ENCODE measurements at regions of chr22 and their contacts with region 1.

Region 1: DNA sequence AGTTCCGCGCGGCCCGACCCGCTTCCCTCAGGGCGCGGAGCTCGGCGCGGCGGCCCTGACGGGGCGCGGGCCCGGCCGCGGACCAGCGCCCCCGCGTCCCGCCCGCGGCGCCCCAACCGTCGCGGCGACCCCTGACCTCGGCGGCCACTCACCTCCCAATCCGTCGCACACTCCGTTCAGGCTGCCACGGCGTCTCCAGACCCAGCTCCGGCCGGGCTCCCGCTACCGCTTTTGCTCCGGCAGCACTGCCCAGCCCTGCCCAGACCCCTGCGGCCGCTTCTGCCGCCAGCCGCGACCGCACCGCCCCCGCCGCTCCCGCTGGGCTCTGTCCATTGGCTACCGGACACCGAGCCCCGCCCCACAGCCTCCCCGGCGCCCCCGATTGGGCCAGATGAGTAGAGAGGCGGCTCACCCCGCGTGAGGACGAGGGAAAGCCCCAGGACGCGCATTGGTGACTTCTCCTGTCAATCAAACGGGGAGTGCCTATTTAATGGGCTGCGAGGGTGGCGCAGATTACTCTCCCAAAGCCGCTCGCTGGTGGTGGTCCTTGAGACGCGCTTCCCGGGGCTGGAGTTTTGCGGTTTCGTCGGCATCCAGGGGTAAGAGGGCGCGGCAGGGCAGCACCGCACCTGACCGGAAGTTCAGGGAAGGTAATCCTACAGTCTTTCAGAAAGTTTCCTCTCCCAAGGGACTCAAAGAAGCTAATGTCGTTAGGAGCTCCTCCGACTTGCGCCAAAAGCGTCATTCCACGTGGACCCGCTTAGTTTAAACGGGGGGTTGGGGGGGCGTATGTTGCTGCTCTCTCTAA is at the start of gene PACSIN2:
- DNase-seq: peak; percentile 95
- ATAC-seq: peak; percentile 92
- H3K4me3 ChIP-seq: peak within 1 kb of the TSS; percentile 90 to 92 (median 91)
- H3K27ac ChIP-seq: peak within 1 kb of the TSS; percentile 66
- H3K4me1 ChIP-seq: peaks cover 80% of the 10 kb centered on the region
- H3K27me3 ChIP-seq: no peaks in the 10 kb centered on the region; a peak in 1 of 5 replicates
- CTCF ChIP-seq: no peak; the same call in none of the 2 replicates
- EP300 ChIP-seq: no peak
- POLR2A ChIP-seq: peak; percentile 99
- RAD21 ChIP-seq: no peak
- total RNA-seq, gene PACSIN2: 54.1 and 65.1 TPM in 2 replicates

Region 2: GRCh38 chr22:42915980-42916765 is 98.9 kb before region 1 on chr22:
- CTCF ChIA-PET with region 1: no interaction called
- POLR2A ChIA-PET with region 1: interaction called, 22 read pairs
- in situ Hi-C with region 1: no loop called
- intact Hi-C with region 1: no loop called
- DNase-seq: peak; percentile 63
- ATAC-seq: peak; percentile 55
- H3K4me3 ChIP-seq: no peak overlapping the region; a peak in 1 of 6 replicates
- H3K27ac ChIP-seq: peak overlapping the region; percentile 71
- H3K4me1 ChIP-seq: peaks cover 94% of the 10 kb centered on the region
- H3K27me3 ChIP-seq: no peaks in the 10 kb centered on the region
- CTCF ChIP-seq: no peak
- EP300 ChIP-seq: no peak
- POLR2A ChIP-seq: no peak
- RAD21 ChIP-seq: no peak

Region 3: DNA sequence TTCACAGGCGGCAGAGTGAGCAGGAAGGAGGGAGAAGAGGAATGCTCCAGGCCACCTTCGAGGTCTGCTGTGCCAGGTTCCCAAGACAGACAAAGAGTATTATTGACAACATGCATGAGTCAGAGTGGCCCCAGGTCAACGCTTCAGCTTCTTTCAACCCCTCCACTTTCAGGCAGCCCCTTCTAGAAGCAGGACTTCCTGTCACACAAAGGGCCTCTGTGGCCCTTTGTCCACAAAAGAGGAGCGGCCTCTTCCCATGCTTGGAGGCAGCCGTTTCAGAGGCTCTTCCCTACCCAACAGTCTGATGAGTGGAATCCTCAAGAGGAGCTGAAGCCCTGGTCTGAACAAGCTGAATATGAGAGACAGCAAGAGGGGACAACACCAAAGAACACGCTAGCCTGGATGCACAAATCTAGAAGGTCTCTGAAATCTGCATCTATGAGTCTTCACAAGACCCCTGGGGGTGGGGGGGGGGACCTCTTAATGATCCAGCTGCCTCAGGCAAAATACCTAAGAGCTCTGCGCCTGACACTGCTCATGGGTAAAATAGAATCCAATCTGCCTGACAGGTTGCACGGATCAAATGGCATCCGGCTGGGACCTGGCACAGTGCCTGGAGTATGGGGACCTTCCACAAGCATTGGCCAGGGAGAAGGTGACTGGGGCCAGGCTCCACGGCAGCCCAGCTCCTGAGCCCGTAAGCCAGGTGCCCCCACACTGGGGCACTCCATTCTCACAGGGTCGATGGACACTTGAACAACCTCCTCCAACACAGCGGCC is 67.7 kb before region 1 on chr22:
- CTCF ChIA-PET with region 1: no interaction called
- POLR2A ChIA-PET with region 1: interaction called, 18 read pairs
- in situ Hi-C with region 1: no loop called
- intact Hi-C with region 1: no loop called
- DNase-seq: peak; percentile 87
- ATAC-seq: peak; percentile 80
- H3K4me3 ChIP-seq: peak overlapping the region in 1 of 3 experiments; percentile 7; a peak in 2 of 6 replicates
- H3K27ac ChIP-seq: peak overlapping the region; percentile 57
- H3K4me1 ChIP-seq: peaks cover 70% of the 10 kb centered on the region
- H3K27me3 ChIP-seq: no peaks in the 10 kb centered on the region
- CTCF ChIP-seq: 0 out of 2 replicates have a peak, but pooled peaks have one; percentile 3
- EP300 ChIP-seq: peak in 1 of 2 experiments; percentile 67; a peak in 2 of 4 replicates
- POLR2A ChIP-seq: no peak
- RAD21 ChIP-seq: no peak

Region 4: GRCh38 chr22:43001271-43002201 is 13.5 kb before region 1 on chr22:
- CTCF ChIA-PET with region 1: no interaction called
- POLR2A ChIA-PET with region 1: interaction called, 185 read pairs
- in situ Hi-C with region 1: no loop called
- intact Hi-C with region 1: no loop called
- DNase-seq: peak; percentile 54
- ATAC-seq: peak; percentile 64
- H3K4me3 ChIP-seq: no peak overlapping the region
- H3K27ac ChIP-seq: peak overlapping the region; percentile 60
- H3K4me1 ChIP-seq: peaks cover 98% of the 10 kb centered on the region
- H3K27me3 ChIP-seq: no peaks in the 10 kb centered on the region
- CTCF ChIP-seq: no peak
- EP300 ChIP-seq: no peak
- POLR2A ChIP-seq: no peak
- RAD21 ChIP-seq: no peak

Region 5: DNA sequence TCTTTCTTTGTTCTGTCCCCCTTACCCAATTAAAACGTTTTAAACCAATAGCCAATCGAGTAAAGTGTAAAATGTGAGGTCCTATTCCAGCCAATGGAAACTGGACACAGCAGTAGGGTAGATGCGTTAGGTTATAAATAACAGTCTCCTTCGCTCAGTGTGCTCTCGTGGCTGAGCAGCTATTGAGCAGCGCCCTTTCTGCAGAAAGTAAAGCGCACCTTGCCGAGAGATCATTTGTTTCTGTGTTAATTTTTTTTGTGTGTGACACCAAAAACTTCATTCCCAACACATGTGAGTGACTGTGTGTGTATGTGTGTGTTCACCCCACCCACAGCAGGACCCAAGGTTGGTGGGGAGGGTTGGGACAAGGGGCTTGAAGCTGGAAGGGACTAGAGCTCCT is 81.3 kb after region 1 on chr22:
- CTCF ChIA-PET with region 1: no interaction called
- POLR2A ChIA-PET with region 1: no interaction called
- in situ Hi-C with region 1: no loop called
- intact Hi-C with region 1: no loop called
- DNase-seq: no peak
- ATAC-seq: no peak
- H3K4me3 ChIP-seq: no peak overlapping the region
- H3K27ac ChIP-seq: no peak overlapping the region
- H3K4me1 ChIP-seq: peaks cover 54% of the 10 kb centered on the region
- H3K27me3 ChIP-seq: no peaks in the 10 kb centered on the region
- CTCF ChIP-seq: no peak
- EP300 ChIP-seq: no peak
- POLR2A ChIP-seq: no peak
- RAD21 ChIP-seq: no peak

Region 6: GRCh38 chr22:43213051-43213450 is 198.0 kb after region 1 on chr22:
- CTCF ChIA-PET with region 1: no interaction called
- POLR2A ChIA-PET with region 1: no interaction called
- in situ Hi-C with region 1: no loop called
- intact Hi-C with region 1: no loop called
- DNase-seq: no peak
- ATAC-seq: peak; percentile 17; the same call in 1 of the 3 replicates
- H3K4me3 ChIP-seq: no peak overlapping the region
- H3K27ac ChIP-seq: no peak overlapping the region
- H3K4me1 ChIP-seq: no peaks in the 10 kb centered on the region
- H3K27me3 ChIP-seq: peaks cover 15 to 51% of the 10 kb centered on the region in 2 experiments; a peak in 4 of 5 replicates
- CTCF ChIP-seq: no peak
- EP300 ChIP-seq: no peak
- POLR2A ChIP-seq: no peak
- RAD21 ChIP-seq: no peak

Region 7: DNA sequence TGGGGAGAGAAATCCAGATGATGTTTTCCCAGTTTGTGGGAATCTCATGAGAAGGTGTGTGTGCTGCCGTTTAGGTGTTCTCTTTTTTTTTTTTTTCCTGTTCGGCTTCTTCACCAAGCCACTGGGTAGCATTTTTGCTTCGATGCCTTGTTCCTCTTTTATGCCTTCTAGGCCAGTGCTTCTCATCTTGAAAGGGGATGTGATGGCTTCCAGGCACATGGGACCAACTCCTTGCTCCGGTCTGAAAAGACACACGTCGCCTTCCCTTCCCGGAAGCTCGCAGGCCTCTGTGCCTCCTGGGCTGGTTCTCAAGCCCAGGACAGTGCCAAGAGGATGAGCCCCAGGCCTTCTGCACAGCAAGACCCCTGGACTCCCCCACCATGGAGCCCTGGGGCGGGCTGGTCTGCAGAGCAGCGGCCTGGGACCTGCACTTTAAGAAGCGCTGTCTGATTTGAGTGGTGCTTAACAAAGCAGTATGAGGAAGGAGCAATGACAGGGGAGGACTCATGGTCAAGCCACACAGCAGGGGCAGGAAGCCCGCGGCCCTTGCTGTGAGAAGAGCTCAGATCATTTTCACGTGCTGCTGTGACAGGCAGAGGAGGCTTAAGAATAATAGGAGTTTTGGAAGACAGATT is 555.6 kb after region 1 on chr22:
- CTCF ChIA-PET with region 1: no interaction called
- POLR2A ChIA-PET with region 1: no interaction called
- in situ Hi-C with region 1: no loop called
- intact Hi-C with region 1: no loop called
- DNase-seq: no peak
- ATAC-seq: no peak
- H3K4me3 ChIP-seq: no peak overlapping the region
- H3K27ac ChIP-seq: no peak overlapping the region
- H3K4me1 ChIP-seq: no peaks in the 10 kb centered on the region
- H3K27me3 ChIP-seq: peaks cover 2 to 18% of the 10 kb centered on the region in 2 experiments; a peak in 2 of 5 replicates
- CTCF ChIP-seq: no peak
- EP300 ChIP-seq: no peak
- POLR2A ChIP-seq: no peak
- RAD21 ChIP-seq: no peak